GM12878 (cell line): ENCODE measurements at regions of chr5 and their contacts with region 1.

Region 1: DNA sequence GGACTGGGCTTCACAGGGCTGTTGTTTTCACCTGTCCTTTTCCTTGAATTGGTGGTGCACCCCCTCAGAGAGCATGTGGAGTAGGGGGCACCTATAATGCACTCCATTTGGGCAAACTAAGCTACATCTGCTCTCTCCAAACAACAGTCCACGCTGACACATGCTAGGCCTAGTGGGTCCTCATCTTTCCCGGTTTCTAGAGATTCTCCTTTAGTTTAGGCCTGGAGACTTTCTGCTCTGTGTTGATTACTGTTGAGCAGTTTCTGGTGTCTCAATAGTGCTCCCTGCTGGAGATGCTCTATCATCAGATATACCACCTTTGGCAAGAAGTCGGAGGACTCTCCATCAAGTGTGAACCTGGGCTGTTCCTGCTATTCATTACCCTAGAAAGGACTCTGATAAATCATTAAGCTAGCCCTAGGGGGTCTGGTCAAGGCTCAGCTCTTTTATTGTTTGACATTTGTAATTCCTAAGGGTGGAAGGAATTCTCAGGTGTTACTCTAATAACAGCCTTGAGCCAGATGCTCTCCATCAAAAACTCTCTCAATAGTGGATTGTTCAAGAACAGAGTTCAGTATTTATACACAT is 64.0 kb upstream of the FYB1 start:
- DNase-seq: no peak
- ATAC-seq: peak; percentile 98
- H3K4me3 ChIP-seq: no peak overlapping the region
- H3K27ac ChIP-seq: no peak overlapping the region
- H3K4me1 ChIP-seq: no peaks in the 10 kb centered on the region
- H3K27me3 ChIP-seq: no peaks in the 10 kb centered on the region
- CTCF ChIP-seq: peak; percentile 57 to 79 (median 58); a peak in 5 of 6 replicates
- EP300 ChIP-seq: no peak
- POLR2A ChIP-seq: no peak
- RAD21 ChIP-seq: peak; percentile 91

Region 2: GRCh38 chr5:38994324-38994927 is 288.9 kb before region 1 on chr5:
- CTCF ChIA-PET with region 1: no interaction called
- POLR2A ChIA-PET with region 1: no interaction called
- RAD21 ChIA-PET with region 1: no interaction called
- SMC1A ChIA-PET with region 1: no interaction called
- in situ Hi-C with region 1: no loop called
- intact Hi-C with region 1: loop called (anchors 1 kb)
- DNase-seq: no peak
- ATAC-seq: peak; percentile 91
- H3K4me3 ChIP-seq: no peak overlapping the region
- H3K27ac ChIP-seq: no peak overlapping the region
- H3K4me1 ChIP-seq: no peaks in the 10 kb centered on the region
- H3K27me3 ChIP-seq: no peaks in the 10 kb centered on the region
- CTCF ChIP-seq: peak; percentile 29 to 51 (median 49); a peak in 4 of 6 replicates
- EP300 ChIP-seq: no peak
- POLR2A ChIP-seq: no peak
- RAD21 ChIP-seq: peak; percentile 80

Region 3: DNA sequence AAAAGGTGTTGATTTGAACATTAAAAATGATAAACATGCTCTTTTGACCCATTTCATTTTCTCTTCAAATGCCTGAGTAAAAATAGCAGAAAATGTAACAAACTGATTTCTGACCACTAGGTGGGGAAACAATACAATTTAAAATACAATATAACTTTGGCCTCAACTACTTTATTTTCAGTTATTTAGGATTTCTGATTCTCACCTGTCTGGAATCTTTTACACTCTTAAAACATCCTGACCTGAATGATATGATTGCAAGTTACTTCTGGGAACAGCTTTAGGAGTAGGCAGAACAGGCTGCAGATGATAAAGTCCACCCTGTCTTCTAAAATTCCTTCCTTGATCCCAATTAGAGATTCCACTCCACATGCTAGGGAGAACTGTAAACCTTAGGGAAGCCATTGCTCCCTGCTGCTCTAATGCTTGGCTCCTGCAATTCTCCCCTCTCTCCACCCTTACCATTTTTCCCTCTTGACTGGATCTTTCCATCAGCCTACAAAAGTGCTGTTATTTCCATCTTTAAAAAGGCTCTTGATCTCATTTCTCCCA is 134.3 kb before region 1 on chr5:
- CTCF ChIA-PET with region 1: interaction called, 11 read pairs
- POLR2A ChIA-PET with region 1: no interaction called
- RAD21 ChIA-PET with region 1: interaction called, 4 read pairs
- SMC1A ChIA-PET with region 1: interaction called, 6 read pairs
- in situ Hi-C with region 1: no loop called
- intact Hi-C with region 1: loop called (anchors 1 kb)
- DNase-seq: no peak
- ATAC-seq: peak; percentile 49
- H3K4me3 ChIP-seq: no peak overlapping the region
- H3K27ac ChIP-seq: no peak overlapping the region
- H3K4me1 ChIP-seq: no peaks in the 10 kb centered on the region
- H3K27me3 ChIP-seq: no peaks in the 10 kb centered on the region
- CTCF ChIP-seq: peak in 2 of 3 experiments; percentile 22 to 26; a peak in 2 of 6 replicates
- EP300 ChIP-seq: no peak
- POLR2A ChIP-seq: no peak
- RAD21 ChIP-seq: 0 out of 2 replicates have a peak, but pooled peaks have one; percentile 12

Region 4: GRCh38 chr5:39211773-39212172 is 71.6 kb before region 1 on chr5:
- CTCF ChIA-PET with region 1: interaction called, 294 read pairs
- POLR2A ChIA-PET with region 1: no interaction called
- RAD21 ChIA-PET with region 1: interaction called, 77 read pairs
- SMC1A ChIA-PET with region 1: interaction called, 192 read pairs
- in situ Hi-C with region 1: loop called (anchors 5 kb)
- intact Hi-C with region 1: no loop called
- DNase-seq: no peak
- ATAC-seq: no peak
- H3K4me3 ChIP-seq: no peak overlapping the region
- H3K27ac ChIP-seq: no peak overlapping the region
- H3K4me1 ChIP-seq: no peaks in the 10 kb centered on the region
- H3K27me3 ChIP-seq: no peaks in the 10 kb centered on the region
- CTCF ChIP-seq: no peak
- EP300 ChIP-seq: no peak
- POLR2A ChIP-seq: no peak
- RAD21 ChIP-seq: no peak

Region 5: GRCh38 chr5:39264528-39264927 is 18.8 kb before region 1 on chr5:
- CTCF ChIA-PET with region 1: interaction called, 14 read pairs
- POLR2A ChIA-PET with region 1: no interaction called
- RAD21 ChIA-PET with region 1: interaction called, 6 read pairs
- SMC1A ChIA-PET with region 1: interaction called, 21 read pairs
- in situ Hi-C with region 1: no loop called
- intact Hi-C with region 1: no loop called
- DNase-seq: peak; percentile 69
- ATAC-seq: peak; percentile 96
- H3K4me3 ChIP-seq: no peak overlapping the region
- H3K27ac ChIP-seq: peak overlapping the region; percentile 56
- H3K4me1 ChIP-seq: 0 out of 2 replicates have a peak, but pooled peaks cover 2% of the 10 kb centered on the region
- H3K27me3 ChIP-seq: no peaks in the 10 kb centered on the region
- CTCF ChIP-seq: no peak
- EP300 ChIP-seq: no peak
- POLR2A ChIP-seq: no peak
- RAD21 ChIP-seq: no peak

Region 6: DNA sequence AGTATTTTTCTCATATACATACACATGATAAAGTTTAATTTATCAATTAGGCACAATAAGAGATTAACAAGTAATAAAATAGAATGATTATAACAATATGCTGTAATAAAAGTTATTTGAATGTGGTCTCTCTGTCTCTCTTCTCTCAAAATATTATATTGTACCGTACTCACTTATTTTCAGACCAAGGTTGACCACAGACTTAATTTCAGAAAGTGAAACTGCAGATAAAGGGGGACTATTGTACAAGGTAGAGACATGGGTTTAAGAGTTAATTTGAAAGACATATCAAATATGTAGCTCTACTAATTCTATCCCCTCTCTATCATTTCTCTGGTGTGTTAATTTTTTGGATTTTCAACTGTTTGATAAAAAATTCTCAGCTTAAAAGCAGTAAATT is 100.9 kb after region 1 on chr5:
- CTCF ChIA-PET with region 1: no interaction called
- POLR2A ChIA-PET with region 1: no interaction called
- RAD21 ChIA-PET with region 1: no interaction called
- SMC1A ChIA-PET with region 1: no interaction called
- in situ Hi-C with region 1: no loop called
- intact Hi-C with region 1: no loop called
- DNase-seq: no peak
- ATAC-seq: no peak
- H3K4me3 ChIP-seq: no peak overlapping the region
- H3K27ac ChIP-seq: no peak overlapping the region
- H3K4me1 ChIP-seq: no peaks in the 10 kb centered on the region
- H3K27me3 ChIP-seq: 0 out of 4 replicates have a peak, but pooled peaks cover 0 to 2% of the 10 kb centered on the region in 2 experiments
- CTCF ChIP-seq: no peak
- EP300 ChIP-seq: no peak
- POLR2A ChIP-seq: no peak
- RAD21 ChIP-seq: no peak